Endothelial cell of umbilical vein (primary cell): ENCODE measurements at regions of chr1 and their contacts with region 1.

Region 1: GRCh38 chr1:91830242-91831131 is 55.5 kb downstream of the TGFBR3 start:
- DNase-seq: peak; percentile 95
- H3K4me3 ChIP-seq: no peak overlapping the region
- H3K27ac ChIP-seq: no peak overlapping the region
- H3K4me1 ChIP-seq: peaks cover 4% of the 10 kb centered on the region
- H3K27me3 ChIP-seq: no peaks in the 10 kb centered on the region
- CTCF ChIP-seq: peak; percentile 44 to 67
- POLR2A ChIP-seq: no peak

Region 2: GRCh38 chr1:91781371-91781825 is 49.1 kb before region 1 on chr1:
- CTCF ChIA-PET with region 1: interaction called, 8 read pairs
- POLR2A ChIA-PET with region 1: no interaction called
- dilution Hi-C with region 1: no loop called
- intact Hi-C with region 1: loop called (anchors 1 kb)
- DNase-seq: peak; percentile 94
- H3K4me3 ChIP-seq: no peak overlapping the region
- H3K27ac ChIP-seq: peak overlapping the region; percentile 54
- H3K4me1 ChIP-seq: peaks cover 40% of the 10 kb centered on the region
- H3K27me3 ChIP-seq: no peaks in the 10 kb centered on the region
- CTCF ChIP-seq: no peak
- POLR2A ChIP-seq: no peak

Region 3: GRCh38 chr1:92065044-92065443 is 234.6 kb after region 1 on chr1:
- CTCF ChIA-PET with region 1: no interaction called
- POLR2A ChIA-PET with region 1: no interaction called
- dilution Hi-C with region 1: no loop called
- intact Hi-C with region 1: no loop called
- DNase-seq: no peak
- H3K4me3 ChIP-seq: no peak overlapping the region
- H3K27ac ChIP-seq: no peak overlapping the region
- H3K4me1 ChIP-seq: no peaks in the 10 kb centered on the region
- H3K27me3 ChIP-seq: no peaks in the 10 kb centered on the region
- CTCF ChIP-seq: no peak
- POLR2A ChIP-seq: no peak

Region 4: DNA sequence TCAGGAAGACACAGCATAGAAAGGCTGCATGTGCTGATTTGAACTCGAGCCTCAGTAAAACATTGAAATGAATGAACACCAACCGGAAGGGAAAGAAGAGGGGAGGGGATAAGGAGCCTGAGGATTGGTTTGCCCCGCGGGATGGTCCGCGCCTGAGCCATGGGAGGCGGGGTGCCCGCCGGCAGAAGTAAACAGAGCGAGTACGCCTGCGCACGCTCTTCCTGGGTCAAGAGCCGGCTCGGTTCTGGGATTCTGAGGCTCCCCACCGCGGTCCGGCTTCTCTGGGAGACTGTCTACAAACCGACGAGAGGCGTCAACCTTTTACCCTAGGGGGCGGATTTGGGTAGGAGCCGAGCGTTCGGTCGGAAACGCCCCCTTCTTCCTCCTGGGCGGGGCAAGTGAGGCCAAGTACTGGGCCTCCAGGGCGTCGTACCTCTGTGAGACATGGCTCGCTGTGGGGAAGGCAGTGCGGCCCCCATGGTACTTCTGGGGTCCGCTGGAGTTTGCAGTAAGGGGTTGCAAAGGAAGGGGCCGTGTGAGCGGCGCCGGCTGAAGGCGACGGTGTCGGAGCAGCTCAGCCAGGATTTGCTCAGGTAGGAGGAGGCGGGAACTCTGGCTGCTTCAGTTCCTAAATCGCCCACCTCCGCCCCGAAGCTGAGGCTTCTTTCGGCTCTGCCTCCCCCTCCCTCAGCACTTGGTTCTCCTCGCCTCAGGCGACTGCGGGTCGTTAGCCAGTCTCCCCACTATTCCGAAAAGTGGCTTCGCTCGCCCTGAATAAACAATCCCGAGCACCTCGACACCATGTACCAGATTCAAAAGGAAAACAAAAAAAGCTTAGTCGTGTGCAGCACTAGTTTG is 249.9 kb after region 1 on chr1 and contains the start of gene BTBD8:
- CTCF ChIA-PET with region 1: no interaction called
- POLR2A ChIA-PET with region 1: no interaction called
- dilution Hi-C with region 1: no loop called
- intact Hi-C with region 1: no loop called
- DNase-seq: peak; percentile 78
- H3K4me3 ChIP-seq: peak within 1 kb of the TSS; percentile 54 to 93 (median 70)
- H3K27ac ChIP-seq: peak within 1 kb of the TSS; percentile 10
- H3K4me1 ChIP-seq: peaks cover 2% of the 10 kb centered on the region
- H3K27me3 ChIP-seq: peaks cover 0 to 2% of the 10 kb centered on the region in 2 experiments
- CTCF ChIP-seq: no peak
- POLR2A ChIP-seq: no peak
- total RNA-seq, gene BTBD8: 1.5 and 1.7 TPM in 2 replicates